Activated CD4-positive, alpha-beta T cell treated with anti-CD3 and anti-CD28 coated beads for 36 hours (primary cell): ENCODE measurements at regions of chrX and their contacts with region 1.

Region 1: DNA sequence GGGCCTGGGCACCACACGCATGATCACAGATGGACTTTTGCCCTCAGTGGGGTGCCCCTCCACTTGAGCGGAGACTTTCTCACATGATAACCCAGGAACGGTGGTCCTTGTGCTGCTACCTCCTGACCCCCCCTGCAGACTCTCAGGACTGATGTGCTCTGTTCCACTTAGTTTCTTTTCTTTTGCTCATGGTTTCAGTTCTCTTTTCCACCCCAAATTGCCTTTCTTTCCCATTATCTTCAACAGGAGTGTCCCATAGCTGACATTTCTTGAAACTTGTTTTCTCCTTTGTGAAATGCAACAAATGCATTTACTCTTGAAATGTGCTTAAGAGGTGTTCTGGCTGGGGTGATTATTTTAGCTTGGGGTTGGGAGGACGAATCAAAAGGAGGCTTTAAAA is 9.0 kb downstream of the MPC1L start:
- DNase-seq: no peak
- ATAC-seq: no peak
- H3K4me3 Mint-ChIP-seq: no peak overlapping the region
- H3K27ac Mint-ChIP-seq: peak overlapping the region; percentile 69
- H3K4me1 Mint-ChIP-seq: peaks cover 7% of the 10 kb centered on the region
- H3K27me3 Mint-ChIP-seq: no peaks in the 10 kb centered on the region

Region 2: GRCh38 chrX:40580537-40581335 is 51.5 kb before region 1 on chrX and contains the start of gene ATP6AP2:
- CTCF ChIA-PET with region 1: no interaction called
- POLR2A ChIA-PET with region 1: no interaction called
- intact Hi-C with region 1: no loop called
- DNase-seq: peak; percentile 94
- ATAC-seq: peak; percentile 98
- H3K4me3 Mint-ChIP-seq: peak within 1 kb of the TSS; percentile 77
- H3K27ac Mint-ChIP-seq: peak within 1 kb of the TSS; percentile 86
- H3K4me1 Mint-ChIP-seq: peaks cover 29% of the 10 kb centered on the region
- H3K27me3 Mint-ChIP-seq: no peaks in the 10 kb centered on the region
- total RNA-seq, gene ATP6AP2: 39.9 to 52.2 TPM

Region 3: GRCh38 chrX:40591126-40591525 is 41.1 kb before region 1 on chrX:
- CTCF ChIA-PET with region 1: no interaction called
- POLR2A ChIA-PET with region 1: no interaction called
- intact Hi-C with region 1: loop called in 1 of 2 experiments (anchors 5 kb)
- DNase-seq: no peak
- ATAC-seq: no peak
- H3K4me3 Mint-ChIP-seq: no peak overlapping the region
- H3K27ac Mint-ChIP-seq: no peak overlapping the region
- H3K4me1 Mint-ChIP-seq: peaks cover 39% of the 10 kb centered on the region
- H3K27me3 Mint-ChIP-seq: no peaks in the 10 kb centered on the region